Activated B cell treated with CpG ODN at 0.5 μM for 24 hours (primary cell): ENCODE measurements at regions of chr12 and their contacts with region 1.

Region 1: GRCh38 chr12:62603061-62603810 is 136.6 kb downstream of the MON2 start:
- DNase-seq: peak; percentile 88
- ATAC-seq: peak; percentile 66
- H3K4me3 Mint-ChIP-seq: peak overlapping the region; percentile 94
- H3K27ac Mint-ChIP-seq: peak overlapping the region; percentile 99
- H3K4me1 Mint-ChIP-seq: peaks cover 49% of the 10 kb centered on the region
- H3K27me3 Mint-ChIP-seq: no peaks in the 10 kb centered on the region
- CTCF ChIP-seq: no peak

Region 2: DNA sequence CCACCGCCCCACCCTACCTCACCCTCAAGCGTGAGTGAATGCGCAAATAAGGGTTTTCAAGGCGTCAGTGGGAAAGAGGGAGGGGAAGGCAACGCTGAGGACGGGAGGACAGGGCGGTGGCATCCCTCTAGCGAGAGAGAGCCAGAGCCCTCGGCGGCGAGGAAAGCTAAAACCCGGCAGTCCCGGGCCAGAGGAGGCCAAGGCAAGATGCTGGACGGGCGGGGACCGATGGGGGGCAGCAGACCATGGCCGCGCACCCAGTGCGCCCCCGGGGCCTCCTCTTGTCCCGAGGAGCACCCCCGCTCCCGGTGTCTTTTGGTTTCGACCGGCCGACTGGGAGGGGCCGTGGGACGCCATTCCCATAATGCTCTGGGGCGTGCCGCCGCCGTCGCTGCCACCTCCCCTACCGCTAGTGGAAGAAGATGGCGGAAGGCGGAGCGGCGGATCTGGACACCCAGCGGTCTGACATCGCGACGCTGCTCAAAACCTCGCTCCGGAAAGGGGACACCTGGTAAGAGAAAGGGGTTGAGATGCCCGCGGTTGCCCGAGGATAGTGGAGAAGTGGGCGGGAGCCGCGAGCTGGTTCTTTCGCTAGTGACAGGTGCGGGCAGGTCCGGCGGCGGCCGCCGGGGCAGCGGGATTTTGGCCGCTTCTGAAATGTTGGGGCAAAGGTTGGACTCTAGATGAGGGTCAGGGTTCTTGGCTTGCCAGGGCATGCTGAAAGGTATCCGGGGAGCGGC is 343.1 kb before region 1 on chr12 and contains the start of gene USP15:
- CTCF ChIA-PET with region 1: no interaction called
- POLR2A ChIA-PET with region 1: interaction called, 41 read pairs
- intact Hi-C with region 1: loop called (anchors 1 kb)
- DNase-seq: peak; percentile 95
- ATAC-seq: peak; percentile 82
- H3K4me3 Mint-ChIP-seq: peak within 1 kb of the TSS; percentile 100
- H3K27ac Mint-ChIP-seq: peak within 1 kb of the TSS; percentile 100
- H3K4me1 Mint-ChIP-seq: peaks cover 53% of the 10 kb centered on the region
- H3K27me3 Mint-ChIP-seq: no peaks in the 10 kb centered on the region
- CTCF ChIP-seq: no peak
- total RNA-seq, gene USP15: 122 and 150 TPM in 2 replicates

Region 3: GRCh38 chr12:62581288-62582064 is 21.8 kb before region 1 on chr12:
- CTCF ChIA-PET with region 1: interaction called, 11 read pairs
- POLR2A ChIA-PET with region 1: interaction called, 24 read pairs
- intact Hi-C with region 1: loop called (anchors 1 kb)
- DNase-seq: no peak
- ATAC-seq: peak; percentile 81
- H3K4me3 Mint-ChIP-seq: no peak overlapping the region
- H3K27ac Mint-ChIP-seq: no peak overlapping the region
- H3K4me1 Mint-ChIP-seq: no peaks in the 10 kb centered on the region
- H3K27me3 Mint-ChIP-seq: no peaks in the 10 kb centered on the region
- CTCF ChIP-seq: peak; percentile 57

Region 4: GRCh38 chr12:62618930-62619329 is 15.7 kb after region 1 on chr12:
- CTCF ChIA-PET with region 1: no interaction called
- POLR2A ChIA-PET with region 1: interaction called, 20 read pairs
- intact Hi-C with region 1: no loop called
- DNase-seq: no peak
- ATAC-seq: no peak
- H3K4me3 Mint-ChIP-seq: no peak overlapping the region
- H3K27ac Mint-ChIP-seq: no peak overlapping the region
- H3K4me1 Mint-ChIP-seq: no peaks in the 10 kb centered on the region
- H3K27me3 Mint-ChIP-seq: peaks cover 3% of the 10 kb centered on the region
- CTCF ChIP-seq: no peak

Region 5: GRCh38 chr12:62793256-62794217 is 190.3 kb after region 1 on chr12:
- CTCF ChIA-PET with region 1: interaction called, 9 read pairs
- POLR2A ChIA-PET with region 1: interaction called, 21 read pairs
- intact Hi-C with region 1: loop called (anchors 1 kb)
- DNase-seq: peak; percentile 67
- ATAC-seq: peak; percentile 82
- H3K4me3 Mint-ChIP-seq: no peak overlapping the region
- H3K27ac Mint-ChIP-seq: no peak overlapping the region
- H3K4me1 Mint-ChIP-seq: no peaks in the 10 kb centered on the region
- H3K27me3 Mint-ChIP-seq: no peaks in the 10 kb centered on the region
- CTCF ChIP-seq: peak; percentile 93

Region 6: DNA sequence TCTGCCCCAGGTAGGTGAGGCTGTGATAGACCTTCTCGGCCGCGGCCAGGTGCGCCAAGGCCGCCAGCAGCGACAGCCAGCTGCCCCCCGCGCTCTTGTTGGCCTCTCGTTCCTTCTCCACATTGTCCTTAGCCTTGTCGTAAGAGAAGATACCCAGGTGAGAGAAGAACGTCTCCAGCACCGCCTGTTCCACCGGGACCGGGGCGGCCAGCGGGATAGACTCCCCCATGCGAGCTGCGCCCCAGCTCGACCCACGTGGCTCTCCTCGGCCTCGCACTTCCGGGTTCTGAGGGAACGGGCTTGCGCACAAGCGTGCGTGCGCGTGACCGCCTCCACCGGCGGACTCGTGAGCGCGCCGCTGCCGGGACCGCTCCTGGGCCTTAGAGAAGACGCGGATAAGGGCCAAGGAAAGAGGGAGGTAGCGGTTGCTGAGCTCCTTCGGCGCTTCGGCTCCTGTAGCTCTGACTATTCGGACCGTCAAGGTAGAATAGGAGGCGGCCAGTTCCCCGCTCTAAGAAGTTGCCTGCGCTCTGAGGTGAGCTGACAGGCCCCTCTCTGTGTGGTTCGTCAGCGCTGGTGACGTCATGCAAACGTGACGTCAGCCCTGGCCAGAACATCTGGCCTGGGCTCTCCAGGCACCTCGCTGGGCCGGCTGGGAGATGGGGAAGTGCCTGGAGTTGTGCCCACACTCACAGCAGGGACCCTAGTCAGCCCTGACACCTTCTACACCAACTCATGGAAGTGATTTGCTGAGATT is 1619.0 kb after region 1 on chr12 and contains the start of gene KICS2:
- CTCF ChIA-PET with region 1: no interaction called
- POLR2A ChIA-PET with region 1: interaction called, 8 read pairs
- intact Hi-C with region 1: loop called (anchors 5 kb)
- DNase-seq: peak; percentile 90
- ATAC-seq: peak; percentile 86
- H3K4me3 Mint-ChIP-seq: peak within 1 kb of the TSS; percentile 96
- H3K27ac Mint-ChIP-seq: peak within 1 kb of the TSS; percentile 97
- H3K4me1 Mint-ChIP-seq: peaks cover 27% of the 10 kb centered on the region
- H3K27me3 Mint-ChIP-seq: no peaks in the 10 kb centered on the region
- CTCF ChIP-seq: no peak
- total RNA-seq, gene KICS2: 16.5 and 16.8 TPM in 2 replicates